Activated CD8-positive, alpha-beta memory T cell treated with anti-CD3 and anti-CD28 coated beads, Interleukin-2, amount 10 ng/mL, durations not matched to agents 7 days and 5 days (primary cell): ENCODE measurements at regions of chr1 and their contacts with region 1.

Region 1: DNA sequence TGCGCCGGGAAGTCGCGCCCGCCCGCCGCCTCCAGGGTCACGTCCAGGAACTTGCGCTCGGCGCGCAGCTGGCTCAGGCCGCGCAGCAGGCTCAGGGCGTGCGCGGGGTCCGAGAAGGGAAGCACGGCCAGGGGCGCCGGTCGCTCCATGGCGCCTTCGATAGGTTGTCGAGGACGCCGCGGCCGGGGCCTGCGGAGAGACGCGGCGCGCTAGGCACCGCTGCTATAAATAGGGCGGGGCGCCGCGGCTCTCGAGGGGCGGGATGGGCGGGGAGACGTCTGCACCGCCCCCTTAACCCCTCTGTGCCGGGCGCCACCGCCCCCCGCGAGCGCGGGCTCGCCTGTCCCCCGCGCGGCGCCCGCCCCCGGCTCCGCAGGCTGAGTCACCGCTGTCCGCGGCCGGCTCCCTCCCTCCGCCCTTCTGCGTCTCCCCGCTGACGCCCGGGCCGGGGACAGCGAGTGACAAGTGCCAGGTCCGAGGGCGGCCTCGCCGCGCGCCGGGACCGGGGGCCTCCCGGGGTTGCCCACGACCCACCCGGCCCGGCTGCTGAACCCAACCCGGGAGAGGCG is at the start of gene KLHL21:
- DNase-seq: peak; percentile 91
- ATAC-seq: peak; percentile 70
- H3K4me3 Mint-ChIP-seq: peak within 1 kb of the TSS; percentile 95
- H3K27ac Mint-ChIP-seq: peak within 1 kb of the TSS; percentile 99
- H3K4me1 Mint-ChIP-seq: peaks cover 36% of the 10 kb centered on the region
- H3K27me3 Mint-ChIP-seq: no peaks in the 10 kb centered on the region
- total RNA-seq, gene KLHL21: 23.9 to 28.2 TPM

Region 2: DNA sequence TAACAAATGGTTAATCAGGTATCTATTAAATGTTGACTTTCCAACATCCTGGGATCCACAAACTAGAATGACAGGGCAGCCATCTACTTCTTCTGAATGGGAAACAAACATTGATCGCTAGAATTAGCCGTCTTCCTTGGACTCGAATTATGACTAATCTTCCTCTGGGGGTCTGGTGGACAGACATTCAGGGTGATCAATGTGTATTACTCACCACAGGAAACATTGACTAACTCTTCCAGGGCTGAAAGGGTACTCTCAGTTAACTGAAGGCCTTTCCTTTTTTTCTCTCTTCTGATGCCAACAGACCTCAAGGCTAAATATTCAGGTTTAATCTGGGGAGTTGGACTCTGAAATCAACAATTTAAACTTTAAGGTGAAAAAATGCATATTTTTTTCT is 57.9 kb before region 1 on chr1:
- CTCF ChIA-PET with region 1: no interaction called
- DNase-seq: no peak
- ATAC-seq: peak; percentile 37
- H3K4me3 Mint-ChIP-seq: no peak overlapping the region
- H3K27ac Mint-ChIP-seq: peak overlapping the region; percentile 80
- H3K4me1 Mint-ChIP-seq: peaks cover 31% of the 10 kb centered on the region
- H3K27me3 Mint-ChIP-seq: no peaks in the 10 kb centered on the region

Region 3: DNA sequence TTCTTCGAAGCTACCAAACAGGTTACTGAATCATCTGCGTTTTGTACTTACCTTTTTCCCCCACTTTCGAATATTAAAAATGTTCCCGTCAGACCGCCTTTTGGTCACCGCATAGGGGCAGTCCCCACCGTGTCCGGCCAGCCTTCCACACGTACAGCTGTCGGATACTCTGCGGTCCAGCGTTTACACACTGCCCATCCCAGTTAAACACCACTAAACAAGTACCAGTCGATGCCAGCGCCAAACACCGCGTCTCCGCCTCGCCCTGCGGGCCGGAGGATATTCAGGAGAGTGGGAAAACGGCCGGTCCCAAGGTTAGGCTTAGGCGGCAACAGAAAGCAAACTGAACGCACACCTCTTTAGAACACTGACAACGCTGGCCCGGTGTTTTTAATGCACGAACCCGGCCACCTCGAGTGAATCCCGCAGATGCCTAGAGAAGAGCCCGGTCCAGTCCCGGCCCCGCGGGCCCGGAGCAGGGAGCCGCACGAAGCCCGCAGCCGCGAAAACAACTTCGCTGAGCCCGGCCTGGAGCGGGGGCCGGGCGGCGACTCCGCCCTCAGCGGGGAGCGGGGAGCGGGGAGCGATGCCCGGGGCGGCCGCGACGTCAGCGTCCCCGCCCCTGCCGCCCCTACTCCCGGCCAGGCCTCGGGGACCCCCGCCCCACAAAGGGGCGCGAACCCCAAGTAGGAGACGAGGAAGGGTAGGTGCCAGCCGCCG is 10.0 kb after region 1 on chr1:
- CTCF ChIA-PET with region 1: interaction called, 13 read pairs
- DNase-seq: peak; percentile 53
- ATAC-seq: peak; percentile 46
- H3K4me3 Mint-ChIP-seq: peak overlapping the region; percentile 95
- H3K27ac Mint-ChIP-seq: peak overlapping the region; percentile 85
- H3K4me1 Mint-ChIP-seq: peaks cover 19% of the 10 kb centered on the region
- H3K27me3 Mint-ChIP-seq: peaks cover 2% of the 10 kb centered on the region